ENCODE measurements at regions of chr3 and their contacts with region 1.

Region 1: DNA sequence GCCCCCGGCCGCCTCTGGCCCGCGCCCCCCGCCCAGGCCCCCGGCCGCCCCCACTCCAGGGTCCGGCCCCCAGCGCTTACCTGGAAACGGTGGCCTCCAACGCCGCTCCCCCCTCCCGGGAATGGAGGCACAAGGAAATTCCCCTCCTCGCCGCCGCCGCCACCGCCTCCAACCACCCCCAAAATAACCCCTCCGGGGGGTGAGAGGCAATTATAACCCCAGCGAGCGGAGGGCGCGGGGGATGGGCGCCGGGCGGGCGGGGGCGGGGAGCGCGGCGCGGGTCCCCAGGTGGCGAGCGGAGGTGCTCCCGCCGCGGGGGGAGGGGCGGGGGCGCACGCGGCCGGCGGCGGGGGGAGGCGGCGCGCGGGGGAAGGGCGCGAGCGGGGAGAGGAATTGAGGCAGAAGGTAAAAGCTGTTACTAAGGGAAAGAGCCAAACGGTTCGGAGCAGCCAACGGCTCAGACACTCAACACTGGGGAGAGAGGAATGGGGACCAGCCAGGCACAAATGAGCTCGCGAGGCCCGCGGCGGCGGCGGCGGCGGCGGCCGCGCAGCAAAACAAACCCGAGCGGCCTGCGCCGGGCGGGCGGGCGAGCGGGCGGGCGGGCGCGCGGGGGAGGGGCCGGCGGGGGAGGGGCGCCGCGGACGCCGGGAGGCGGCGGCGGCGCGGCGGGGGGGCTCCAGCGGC is at the start of gene TBL1XR1:
- DNase-seq: peak; percentile 95 to 96
- ATAC-seq: peak; percentile 90
- H3K4me3 ChIP-seq: peak within 1 kb of the TSS; percentile 99 to 100
- H3K27ac ChIP-seq: peak within 1 kb of the TSS; percentile 87 to 94
- H3K4me1 ChIP-seq: peaks cover 0 to 3% of the 10 kb centered on the region in 2 donors
- H3K27me3 ChIP-seq: no peaks in the 10 kb centered on the region
- total RNA-seq, gene TBL1XR1: 129 to 200 TPM

Region 2: DNA sequence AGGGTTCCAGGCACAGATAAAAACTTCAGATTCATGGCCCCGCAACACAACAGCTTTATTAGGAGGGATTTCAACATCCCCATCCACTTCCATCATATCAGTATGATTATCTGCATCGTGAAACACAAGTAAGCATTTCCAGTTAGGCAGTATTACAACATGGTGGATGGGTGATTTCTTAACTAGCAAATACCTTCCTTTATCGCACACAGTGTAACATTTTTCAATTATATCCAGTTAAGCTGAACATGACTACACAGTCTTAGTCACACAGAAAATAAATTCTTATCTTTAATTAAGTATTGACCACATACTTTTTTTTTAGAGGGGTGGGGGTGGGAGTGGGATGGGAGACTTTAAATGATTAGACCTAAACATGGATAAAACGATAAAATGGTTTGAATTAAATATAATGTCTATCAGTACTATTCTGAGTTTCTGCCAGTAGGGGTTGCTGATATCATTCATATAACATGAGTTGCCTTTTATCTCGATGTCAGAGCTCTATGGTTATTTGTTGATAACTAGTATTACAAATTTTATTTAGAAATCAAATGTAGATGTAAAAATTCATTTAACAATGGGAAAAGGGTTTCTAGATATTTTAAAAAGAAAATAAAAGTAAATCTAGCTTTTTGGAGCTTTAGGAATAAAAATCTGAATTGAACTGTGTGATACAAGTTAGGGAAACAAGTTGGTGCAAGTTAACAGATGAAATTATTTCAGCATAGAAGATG is 146.5 kb before region 1 on chr3:
- intact Hi-C with region 1: loop called (anchors 5 kb)
- DNase-seq: no peak
- ATAC-seq: peak; percentile 79
- H3K4me3 ChIP-seq: no peak overlapping the region
- H3K27ac ChIP-seq: no peak overlapping the region
- H3K4me1 ChIP-seq: peaks cover 0 to 2% of the 10 kb centered on the region in 2 donors
- H3K27me3 ChIP-seq: no peaks in the 10 kb centered on the region

Region 3: GRCh38 chr3:177057768-177058167 is 139.4 kb before region 1 on chr3:
- intact Hi-C with region 1: loop called (anchors 5 kb)
- DNase-seq: no peak
- ATAC-seq: no peak
- H3K4me3 ChIP-seq: no peak overlapping the region
- H3K27ac ChIP-seq: no peak overlapping the region
- H3K4me1 ChIP-seq: peaks cover 0 to 6% of the 10 kb centered on the region in 2 donors
- H3K27me3 ChIP-seq: no peaks in the 10 kb centered on the region

Region 4: GRCh38 chr3:177126015-177126773 is 71.0 kb before region 1 on chr3:
- intact Hi-C with region 1: loop called in 1 of 2 experiments (anchors 10 kb)
- DNase-seq: no peak
- ATAC-seq: no peak
- H3K4me3 ChIP-seq: no peak overlapping the region
- H3K27ac ChIP-seq: no peak overlapping the region
- H3K4me1 ChIP-seq: peaks cover 1 to 6% of the 10 kb centered on the region in 2 donors
- H3K27me3 ChIP-seq: no peaks in the 10 kb centered on the region

Region 5: GRCh38 chr3:177478170-177478860 is 281.1 kb after region 1 on chr3:
- intact Hi-C with region 1: loop called (anchors 10 kb)
- DNase-seq: no peak
- ATAC-seq: peak; percentile 90
- H3K4me3 ChIP-seq: no peak overlapping the region
- H3K27ac ChIP-seq: peak overlapping the region in 1 of 2 donors; percentile 68
- H3K4me1 ChIP-seq: peaks cover 3 to 5% of the 10 kb centered on the region in 2 donors
- H3K27me3 ChIP-seq: no peaks in the 10 kb centered on the region

Region 6: DNA sequence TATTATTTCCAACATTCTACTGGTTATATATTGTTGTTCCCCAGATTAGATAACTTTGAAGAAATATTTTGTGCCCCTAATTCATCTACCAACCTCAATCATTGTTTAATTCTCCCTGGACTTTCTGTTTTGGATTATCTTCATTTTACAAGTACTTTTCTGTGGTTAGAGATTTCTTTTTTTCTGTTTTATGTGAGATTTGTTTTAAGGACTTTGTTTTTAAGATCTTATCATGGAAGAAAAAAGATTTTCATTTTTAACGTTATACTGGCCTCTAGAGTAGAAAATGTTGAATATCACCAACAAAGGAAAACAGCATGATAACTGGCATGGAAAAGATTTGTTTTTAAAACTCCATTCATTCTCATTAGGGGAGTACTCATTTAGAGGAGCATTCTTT is 1128.1 kb after region 1 on chr3:
- intact Hi-C with region 1: loop called (anchors 10 kb)
- DNase-seq: no peak
- ATAC-seq: no peak
- H3K4me3 ChIP-seq: no peak overlapping the region
- H3K27ac ChIP-seq: no peak overlapping the region
- H3K4me1 ChIP-seq: peaks cover 0 to 7% of the 10 kb centered on the region in 2 donors
- H3K27me3 ChIP-seq: no peaks in the 10 kb centered on the region

Measured in aorta (tissue), 5 donors.